HCT116 (cell line): ENCODE measurements at regions of chr4 and their contacts with region 1.

Region 1: GRCh38 chr4:8176547-8177399 is 18.2 kb upstream of the ABLIM2 start:
- DNase-seq: peak; percentile 19
- ATAC-seq: peak; percentile 96
- H3K4me3 ChIP-seq: no peak overlapping the region
- H3K27ac ChIP-seq: no peak overlapping the region
- H3K4me1 ChIP-seq: peaks cover 0 to 18% of the 10 kb centered on the region in 2 experiments; a peak in 1 of 4 replicates
- H3K27me3 ChIP-seq: 0 out of 2 replicates have a peak, but pooled peaks cover 3% of the 10 kb centered on the region
- CTCF ChIP-seq: peak; percentile 84 to 89 (median 88)
- POLR2A ChIP-seq: no peak
- RAD21 ChIP-seq: peak; percentile 97

Region 2: DNA sequence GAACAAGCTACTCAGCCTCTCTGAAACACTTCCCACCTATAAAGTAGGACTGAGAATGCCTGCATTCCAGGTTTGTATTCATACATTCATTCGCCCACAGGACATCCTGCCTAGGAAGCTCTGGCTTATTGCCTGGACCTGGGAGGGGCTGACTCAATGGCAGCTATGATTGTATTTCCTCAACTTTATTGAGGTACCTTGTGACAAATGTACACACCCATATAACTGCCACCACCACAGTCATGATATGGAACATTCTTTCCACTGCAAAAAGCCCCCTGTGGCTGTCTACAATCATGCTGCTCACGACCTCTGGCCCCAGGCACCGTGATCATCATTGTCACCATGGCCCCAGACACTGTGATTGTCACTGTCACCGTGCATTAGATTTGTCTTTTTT is 86.5 kb before region 1 on chr4:
- CTCF ChIA-PET with region 1: no interaction called
- POLR2A ChIA-PET with region 1: no interaction called
- RAD21 ChIA-PET with region 1: no interaction called
- intact Hi-C with region 1: no loop called
- DNase-seq: no peak
- ATAC-seq: no peak
- H3K4me3 ChIP-seq: no peak overlapping the region
- H3K27ac ChIP-seq: no peak overlapping the region
- H3K4me1 ChIP-seq: peaks cover 0 to 8% of the 10 kb centered on the region in 2 experiments; a peak in 1 of 4 replicates
- H3K27me3 ChIP-seq: no peaks in the 10 kb centered on the region
- CTCF ChIP-seq: no peak
- POLR2A ChIP-seq: no peak
- RAD21 ChIP-seq: no peak

Region 3: GRCh38 chr4:8192748-8193738 is 16.3 kb after region 1 on chr4:
- CTCF ChIA-PET with region 1: interaction called, 36 read pairs
- POLR2A ChIA-PET with region 1: interaction called, 4 read pairs
- RAD21 ChIA-PET with region 1: interaction called, 6 to 8 read pairs
- intact Hi-C with region 1: loop called (anchors 1 kb)
- DNase-seq: peak; percentile 39
- ATAC-seq: peak; percentile 69
- H3K4me3 ChIP-seq: no peak overlapping the region
- H3K27ac ChIP-seq: 0 out of 2 replicates have a peak overlapping the region, but pooled peaks have one; percentile 6
- H3K4me1 ChIP-seq: peaks cover 20 to 59% of the 10 kb centered on the region in 2 experiments
- H3K27me3 ChIP-seq: no peaks in the 10 kb centered on the region
- CTCF ChIP-seq: peak in 1 of 3 experiments; percentile 33; a peak in 2 of 6 replicates
- POLR2A ChIP-seq: no peak
- RAD21 ChIP-seq: no peak

Region 4: DNA sequence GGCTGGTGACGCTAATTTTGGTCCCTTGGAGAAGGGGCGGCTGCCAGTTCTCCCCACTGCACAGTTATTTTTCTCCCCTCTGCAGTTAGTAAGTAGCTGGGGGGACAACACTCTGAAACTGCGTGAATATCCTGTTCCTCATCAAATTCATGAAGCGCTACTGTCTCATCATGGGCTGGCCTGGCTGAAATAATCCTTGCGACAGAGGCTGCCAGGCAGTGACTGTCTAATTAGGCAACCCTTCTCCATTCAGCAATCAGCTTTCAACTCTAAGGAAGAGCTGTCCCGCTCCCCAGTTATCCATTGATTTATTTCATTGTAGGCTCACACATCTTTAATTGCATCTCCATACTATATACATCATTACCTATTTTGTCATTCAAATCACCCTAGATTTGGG is 30.5 kb after region 1 on chr4:
- CTCF ChIA-PET with region 1: no interaction called
- POLR2A ChIA-PET with region 1: no interaction called
- RAD21 ChIA-PET with region 1: no interaction called
- intact Hi-C with region 1: no loop called
- DNase-seq: no peak
- ATAC-seq: no peak
- H3K4me3 ChIP-seq: no peak overlapping the region
- H3K27ac ChIP-seq: no peak overlapping the region
- H3K4me1 ChIP-seq: peaks cover 2 to 16% of the 10 kb centered on the region in 2 experiments; a peak in 3 of 4 replicates
- H3K27me3 ChIP-seq: no peaks in the 10 kb centered on the region
- CTCF ChIP-seq: no peak
- POLR2A ChIP-seq: no peak
- RAD21 ChIP-seq: no peak

Region 5: DNA sequence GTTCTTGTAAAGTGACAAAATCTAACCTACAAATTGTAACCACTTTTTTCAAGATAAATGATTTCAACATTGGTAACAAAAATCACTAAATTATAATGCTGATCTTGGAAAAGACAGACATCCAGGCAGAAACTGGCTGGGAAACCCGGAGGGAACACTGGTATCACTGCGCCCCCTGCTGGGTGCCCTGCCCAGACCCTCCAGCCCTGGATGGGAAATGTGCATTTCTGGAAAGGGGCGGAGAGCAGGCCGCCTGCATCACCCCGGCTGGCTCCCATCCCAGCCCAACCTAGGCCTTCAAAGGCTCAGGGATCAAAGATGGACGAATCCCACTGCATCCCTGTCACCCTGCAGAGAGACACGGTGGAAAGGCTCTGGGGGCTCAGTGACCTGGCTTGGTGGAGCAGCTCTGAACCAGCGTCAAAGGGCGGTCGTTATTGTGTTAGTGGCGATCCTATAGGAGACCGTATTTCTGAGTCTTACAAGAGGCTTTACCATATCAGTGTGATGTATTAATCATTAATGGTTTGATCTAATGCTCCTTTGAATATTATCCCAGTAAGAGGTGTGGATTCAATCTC is 226.5 kb after region 1 on chr4:
- CTCF ChIA-PET with region 1: interaction called, 11 read pairs
- POLR2A ChIA-PET with region 1: no interaction called
- RAD21 ChIA-PET with region 1: no interaction called
- intact Hi-C with region 1: loop called (anchors 2 kb)
- DNase-seq: peak; percentile 23
- ATAC-seq: peak; percentile 93
- H3K4me3 ChIP-seq: no peak overlapping the region
- H3K27ac ChIP-seq: no peak overlapping the region
- H3K4me1 ChIP-seq: no peaks in the 10 kb centered on the region
- H3K27me3 ChIP-seq: no peaks in the 10 kb centered on the region
- CTCF ChIP-seq: peak; percentile 86 to 94 (median 91)
- POLR2A ChIP-seq: no peak
- RAD21 ChIP-seq: peak; percentile 91

Region 6: DNA sequence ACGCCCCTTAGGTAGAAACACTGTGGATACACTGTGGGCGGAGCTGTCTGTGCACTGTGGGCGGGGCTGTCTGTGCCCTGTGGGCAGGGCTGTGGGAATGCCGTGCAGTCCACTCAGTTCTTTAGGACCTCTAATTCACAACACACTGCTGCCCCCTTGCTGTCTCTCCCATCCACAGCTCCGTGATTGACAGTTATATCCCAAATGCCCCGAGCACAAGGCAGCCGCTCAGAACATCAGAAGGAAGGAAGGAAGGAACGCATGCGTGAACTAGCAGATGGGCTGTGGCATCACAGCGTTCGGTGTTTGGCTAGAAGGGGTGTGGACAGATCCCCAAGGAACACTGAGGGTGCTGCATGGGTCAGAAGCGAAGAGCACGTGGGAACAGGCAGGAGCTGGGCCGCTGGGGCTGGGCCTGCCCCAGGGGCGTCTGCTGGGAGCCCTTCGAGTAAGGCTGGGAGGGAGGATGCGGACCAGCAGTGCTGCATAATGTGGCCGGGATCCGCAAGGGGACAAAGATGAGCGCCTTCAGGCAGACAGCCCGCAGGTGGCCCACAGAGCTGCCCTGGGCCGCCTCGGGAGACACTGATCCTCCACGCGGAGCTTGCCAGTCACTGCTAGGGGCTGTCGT is 234.0 kb after region 1 on chr4:
- CTCF ChIA-PET with region 1: interaction called, 21 read pairs
- POLR2A ChIA-PET with region 1: no interaction called
- RAD21 ChIA-PET with region 1: interaction called, 3 to 7 read pairs
- intact Hi-C with region 1: no loop called
- DNase-seq: peak; percentile 81
- ATAC-seq: peak; percentile 94
- H3K4me3 ChIP-seq: no peak overlapping the region
- H3K27ac ChIP-seq: no peak overlapping the region
- H3K4me1 ChIP-seq: peaks cover 12 to 15% of the 10 kb centered on the region in 2 experiments; a peak in 3 of 4 replicates
- H3K27me3 ChIP-seq: no peaks in the 10 kb centered on the region
- CTCF ChIP-seq: peak; percentile 61 to 67 (median 66)
- POLR2A ChIP-seq: no peak
- RAD21 ChIP-seq: peak; percentile 76

Region 7: GRCh38 chr4:8665406-8666360 is 488.9 kb after region 1 on chr4:
- CTCF ChIA-PET with region 1: no interaction called
- POLR2A ChIA-PET with region 1: no interaction called
- RAD21 ChIA-PET with region 1: no interaction called
- intact Hi-C with region 1: no loop called
- DNase-seq: no peak
- ATAC-seq: no peak
- H3K4me3 ChIP-seq: no peak overlapping the region
- H3K27ac ChIP-seq: no peak overlapping the region
- H3K4me1 ChIP-seq: peaks cover 0 to 8% of the 10 kb centered on the region in 2 experiments; a peak in 1 of 4 replicates
- H3K27me3 ChIP-seq: peaks cover 31% of the 10 kb centered on the region
- CTCF ChIP-seq: no peak
- POLR2A ChIP-seq: no peak
- RAD21 ChIP-seq: no peak